ENCODE measurements at regions of chrX and their contacts with region 1.

Region 1: GRCh38 chrX:72620550-72621145 is 48.0 kb upstream of the HDAC8 start:
- DNase-seq: peak; percentile 69
- H3K4me3 Mint-ChIP-seq: peak overlapping the region; percentile 80
- H3K27ac Mint-ChIP-seq: peak overlapping the region; percentile 98
- H3K4me1 Mint-ChIP-seq: peaks cover 25% of the 10 kb centered on the region
- H3K27me3 Mint-ChIP-seq: no peaks in the 10 kb centered on the region

Region 2: GRCh38 chrX:72269671-72270251 is 350.9 kb before region 1 on chrX:
- intact Hi-C with region 1: loop called (anchors 10 kb)
- DNase-seq: peak; percentile 69
- H3K4me3 Mint-ChIP-seq: peak overlapping the region; percentile 67
- H3K27ac Mint-ChIP-seq: peak overlapping the region; percentile 91
- H3K4me1 Mint-ChIP-seq: peaks cover 31% of the 10 kb centered on the region
- H3K27me3 Mint-ChIP-seq: no peaks in the 10 kb centered on the region

Region 3: GRCh38 chrX:72349190-72349589 is 271.5 kb before region 1 on chrX:
- intact Hi-C with region 1: loop called (anchors 1 kb)
- DNase-seq: peak; percentile 51
- H3K4me3 Mint-ChIP-seq: peak overlapping the region; percentile 72
- H3K27ac Mint-ChIP-seq: peak overlapping the region; percentile 85
- H3K4me1 Mint-ChIP-seq: peaks cover 19% of the 10 kb centered on the region
- H3K27me3 Mint-ChIP-seq: no peaks in the 10 kb centered on the region

Region 4: GRCh38 chrX:72572248-72573157 is 48.1 kb before region 1 on chrX and contains the start of gene HDAC8:
- intact Hi-C with region 1: loop called (anchors 1 kb)
- DNase-seq: peak; percentile 85
- H3K4me3 Mint-ChIP-seq: peak within 1 kb of the TSS; percentile 92
- H3K27ac Mint-ChIP-seq: peak within 1 kb of the TSS; percentile 96
- H3K4me1 Mint-ChIP-seq: peaks cover 5% of the 10 kb centered on the region
- H3K27me3 Mint-ChIP-seq: peaks cover 9% of the 10 kb centered on the region
- total RNA-seq, gene HDAC8: 29.2 and 29.9 TPM in 2 replicates

Region 5: DNA sequence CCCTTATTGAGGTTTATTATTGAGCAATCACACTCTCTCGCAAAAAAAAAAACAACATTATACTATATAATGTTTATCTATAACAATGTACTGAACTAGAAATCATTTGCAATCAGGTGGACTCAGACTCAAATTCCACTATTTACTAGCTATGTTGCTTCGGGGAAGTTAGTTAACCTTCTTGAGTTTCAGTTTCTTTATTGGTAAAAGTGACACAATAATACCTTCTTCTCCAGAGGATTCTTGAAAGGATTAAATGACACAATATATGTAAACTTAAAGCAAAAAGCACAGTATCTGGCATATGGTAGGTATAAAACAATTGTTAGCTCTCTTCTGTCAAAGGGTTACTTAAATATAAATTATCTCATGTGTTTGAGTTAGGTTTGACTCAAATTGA is 16.5 kb before region 1 on chrX:
- intact Hi-C with region 1: loop called (anchors 1 kb)
- DNase-seq: no peak
- H3K4me3 Mint-ChIP-seq: no peak overlapping the region
- H3K27ac Mint-ChIP-seq: no peak overlapping the region
- H3K4me1 Mint-ChIP-seq: peaks cover 5% of the 10 kb centered on the region
- H3K27me3 Mint-ChIP-seq: no peaks in the 10 kb centered on the region

Region 6: DNA sequence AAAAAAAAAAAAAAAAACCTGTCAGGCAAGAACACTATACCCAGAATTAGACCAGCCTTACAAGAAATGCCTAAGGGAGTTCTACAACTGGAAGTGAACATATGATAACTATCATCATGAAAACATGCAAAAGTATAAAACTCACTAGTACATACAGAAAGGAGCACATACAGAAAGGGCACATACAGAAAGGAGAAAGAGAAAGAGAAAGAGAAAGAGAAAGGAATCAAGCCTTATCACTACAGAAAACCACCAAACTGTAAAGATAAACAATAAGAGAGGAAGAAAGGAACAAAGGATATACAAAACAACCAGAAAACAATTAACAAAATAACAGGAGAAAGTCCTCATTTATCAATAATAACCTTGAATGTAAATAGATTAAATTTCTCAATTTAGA is 43.1 kb after region 1 on chrX:
- intact Hi-C with region 1: loop called (anchors 5 kb)
- DNase-seq: no peak
- H3K4me3 Mint-ChIP-seq: peak overlapping the region; percentile 5
- H3K27ac Mint-ChIP-seq: no peak overlapping the region
- H3K4me1 Mint-ChIP-seq: peaks cover 13% of the 10 kb centered on the region
- H3K27me3 Mint-ChIP-seq: no peaks in the 10 kb centered on the region

Region 7: DNA sequence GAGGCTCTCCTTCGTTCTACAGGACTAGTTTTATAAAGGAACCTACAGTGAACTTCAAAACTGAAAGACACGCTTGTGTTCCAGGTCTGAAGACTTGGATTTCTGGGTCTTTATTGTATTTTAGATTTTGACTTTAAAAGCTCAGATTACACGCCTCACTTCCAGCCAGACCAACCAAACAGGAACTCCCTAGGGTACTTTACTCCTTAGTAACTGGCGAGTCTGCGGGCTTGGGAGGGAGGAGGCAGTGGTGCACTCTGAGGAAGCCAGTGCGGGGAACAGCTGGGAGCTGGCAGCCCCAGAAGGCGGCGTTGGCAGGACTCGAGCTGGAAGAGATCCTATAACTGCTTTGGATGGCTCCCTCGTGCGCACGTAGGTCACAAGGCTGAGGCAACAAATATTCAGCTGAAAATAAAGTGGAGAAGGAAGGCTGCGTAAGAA is 93.8 kb after region 1 on chrX:
- intact Hi-C with region 1: loop called (anchors 1 kb)
- DNase-seq: peak; percentile 53
- H3K4me3 Mint-ChIP-seq: peak overlapping the region; percentile 80
- H3K27ac Mint-ChIP-seq: peak overlapping the region; percentile 80
- H3K4me1 Mint-ChIP-seq: peaks cover 11% of the 10 kb centered on the region
- H3K27me3 Mint-ChIP-seq: peaks cover 5% of the 10 kb centered on the region

Measured in activated CD4-positive, alpha-beta T cell treated with anti-CD3 and anti-CD28 coated beads, Interleukin-2, amount 10 ng/mL, durations not matched to agents 24 days and 14 days (primary cell).